Mammary epithelial cell (primary cell): ENCODE measurements at regions of chr11 and their contacts with region 1.

Region 1: GRCh38 chr11:56799691-56800210 is 51.3 kb upstream of the OR9G4 start:
- DNase-seq: no peak
- H3K4me3 ChIP-seq: no peak overlapping the region
- H3K27ac ChIP-seq: no peak overlapping the region
- H3K4me1 ChIP-seq: no peaks in the 10 kb centered on the region
- H3K27me3 ChIP-seq: no peaks in the 10 kb centered on the region
- CTCF ChIP-seq: no peak

Region 2: GRCh38 chr11:55942785-55943392 is 856.9 kb before region 1 on chr11:
- CTCF ChIA-PET with region 1: no interaction called
- dilution Hi-C with region 1: no loop called
- in situ Hi-C with region 1: no loop called
- intact Hi-C with region 1: no loop called
- DNase-seq: peak; percentile 16
- H3K4me3 ChIP-seq: no peak overlapping the region
- H3K27ac ChIP-seq: no peak overlapping the region
- H3K4me1 ChIP-seq: no peaks in the 10 kb centered on the region
- H3K27me3 ChIP-seq: no peaks in the 10 kb centered on the region
- CTCF ChIP-seq: peak; percentile 32 to 57

Region 3: DNA sequence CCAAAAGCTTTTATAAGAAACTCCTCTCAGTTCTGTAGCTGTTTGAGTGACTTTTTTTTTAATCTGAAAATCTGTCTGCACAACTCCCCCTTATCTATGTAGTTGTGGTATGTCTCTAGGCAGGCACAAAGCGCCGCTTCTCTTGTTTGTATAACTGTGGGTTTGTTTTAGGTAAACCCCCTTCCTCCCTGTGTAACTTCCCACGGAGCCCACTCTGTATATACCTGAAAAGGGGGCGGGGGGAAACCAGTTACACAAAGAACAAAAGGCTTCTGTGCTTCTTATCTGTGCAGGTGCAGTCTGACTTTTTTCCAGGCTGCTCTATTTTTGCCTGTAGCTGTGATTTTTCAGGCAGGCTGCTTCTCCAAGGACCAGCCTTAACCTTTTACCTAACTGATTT is 843.2 kb before region 1 on chr11:
- CTCF ChIA-PET with region 1: no interaction called
- dilution Hi-C with region 1: no loop called
- in situ Hi-C with region 1: loop called in 1 of 2 experiments (anchors 10 kb)
- intact Hi-C with region 1: no loop called
- DNase-seq: no peak
- H3K4me3 ChIP-seq: no peak overlapping the region
- H3K27ac ChIP-seq: no peak overlapping the region
- H3K4me1 ChIP-seq: no peaks in the 10 kb centered on the region
- H3K27me3 ChIP-seq: no peaks in the 10 kb centered on the region
- CTCF ChIP-seq: no peak